Mammary epithelial cell (primary cell): ENCODE measurements at regions of chr17 and their contacts with region 1.

Region 1: DNA sequence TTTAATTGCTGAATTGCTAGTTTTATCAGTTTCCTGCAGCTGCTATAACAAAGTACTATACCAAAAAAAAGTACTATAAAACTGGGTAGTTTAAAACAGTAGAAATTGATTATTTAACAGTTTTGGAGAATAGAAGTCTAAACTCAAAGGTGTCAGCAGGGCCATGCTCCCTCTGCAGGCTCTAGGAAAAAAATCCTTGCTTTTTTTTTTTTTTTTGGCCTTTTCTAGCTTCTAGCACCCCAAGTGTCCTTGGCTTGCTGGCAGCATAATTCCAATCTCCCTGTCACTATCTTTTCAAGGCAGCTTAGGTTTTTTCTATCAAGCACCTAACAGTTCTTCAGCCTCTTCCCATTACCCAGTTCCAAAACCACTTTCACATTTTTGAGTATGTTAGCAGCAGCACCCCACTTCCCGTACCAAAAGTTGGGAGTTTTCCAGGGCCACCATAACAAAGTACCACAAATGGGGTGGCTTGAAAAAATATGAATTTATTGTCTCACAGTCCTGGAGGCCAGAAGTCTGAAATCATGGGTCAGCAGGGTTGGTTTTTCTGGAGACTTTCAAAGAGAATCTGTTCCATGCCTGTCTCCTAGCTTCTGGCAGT is 37.4 kb downstream of the BPTF start:
- DNase-seq: no peak
- H3K4me3 ChIP-seq: no peak overlapping the region
- H3K27ac ChIP-seq: no peak overlapping the region
- H3K4me1 ChIP-seq: no peaks in the 10 kb centered on the region
- H3K27me3 ChIP-seq: no peaks in the 10 kb centered on the region
- CTCF ChIP-seq: peak in 1 of 2 donors; percentile 31

Region 2: GRCh38 chr17:67151717-67152116 is 711.0 kb before region 1 on chr17:
- CTCF ChIA-PET with region 1: no interaction called
- dilution Hi-C with region 1: no loop called
- in situ Hi-C with region 1: no loop called
- intact Hi-C with region 1: no loop called
- DNase-seq: peak; percentile 85
- H3K4me3 ChIP-seq: no peak overlapping the region
- H3K27ac ChIP-seq: peak overlapping the region; percentile 46
- H3K4me1 ChIP-seq: peaks cover 18% of the 10 kb centered on the region
- H3K27me3 ChIP-seq: no peaks in the 10 kb centered on the region
- CTCF ChIP-seq: no peak

Region 3: DNA sequence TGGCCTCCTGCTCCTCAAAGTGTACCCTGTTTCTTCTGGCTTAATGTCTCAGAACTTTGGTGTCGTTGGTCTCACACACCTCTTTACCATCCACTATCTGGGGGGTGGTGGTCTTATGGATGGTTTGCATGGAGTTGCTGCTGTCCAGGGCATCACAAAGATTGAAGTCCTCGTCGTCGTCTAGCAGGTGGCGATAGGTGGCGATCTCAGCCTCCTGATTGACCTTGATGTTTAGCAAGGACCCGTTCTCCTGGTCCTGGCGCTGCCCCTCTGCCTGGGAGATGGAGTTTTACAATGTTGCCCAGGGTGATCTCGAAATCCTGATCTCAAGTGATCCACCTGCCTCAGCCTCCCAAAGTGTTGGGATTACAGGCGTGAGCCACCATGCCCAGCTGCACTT is 586.6 kb before region 1 on chr17:
- CTCF ChIA-PET with region 1: interaction called, 27 read pairs
- dilution Hi-C with region 1: no loop called
- in situ Hi-C with region 1: no loop called
- intact Hi-C with region 1: no loop called
- DNase-seq: no peak
- H3K4me3 ChIP-seq: no peak overlapping the region
- H3K27ac ChIP-seq: no peak overlapping the region
- H3K4me1 ChIP-seq: peaks cover 12% of the 10 kb centered on the region
- H3K27me3 ChIP-seq: no peaks in the 10 kb centered on the region
- CTCF ChIP-seq: peak; percentile 13 to 50

Region 4: GRCh38 chr17:67879662-67880061 is 16.9 kb after region 1 on chr17:
- CTCF ChIA-PET with region 1: no interaction called
- dilution Hi-C with region 1: no loop called
- in situ Hi-C with region 1: no loop called
- intact Hi-C with region 1: no loop called
- DNase-seq: no peak
- H3K4me3 ChIP-seq: no peak overlapping the region
- H3K27ac ChIP-seq: no peak overlapping the region
- H3K4me1 ChIP-seq: no peaks in the 10 kb centered on the region
- H3K27me3 ChIP-seq: no peaks in the 10 kb centered on the region
- CTCF ChIP-seq: no peak

Region 5: DNA sequence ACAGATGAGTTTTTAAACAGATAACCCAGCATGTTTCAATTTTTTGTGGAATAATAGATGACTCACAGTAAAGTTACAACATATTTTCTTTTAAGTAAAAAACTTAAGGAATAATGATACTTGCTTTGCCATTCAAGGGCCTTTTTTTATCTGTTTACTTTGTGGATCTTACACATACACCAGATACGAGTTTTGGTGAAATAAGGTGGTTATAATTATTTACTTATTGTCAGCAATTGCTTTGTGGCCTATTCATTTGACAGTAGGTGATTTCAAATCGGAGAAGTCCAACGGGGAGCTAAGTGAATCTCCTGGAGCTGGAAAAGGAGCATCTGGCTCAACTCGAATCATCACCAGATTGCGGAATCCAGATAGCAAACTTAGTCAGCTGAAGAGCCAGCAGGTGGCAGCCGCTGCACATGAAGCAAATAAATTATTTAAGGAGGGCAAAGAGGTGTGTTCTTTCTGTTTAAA is 28.9 kb after region 1 on chr17:
- CTCF ChIA-PET with region 1: no interaction called
- dilution Hi-C with region 1: no loop called
- in situ Hi-C with region 1: no loop called
- intact Hi-C with region 1: no loop called
- DNase-seq: peak; percentile 5
- H3K4me3 ChIP-seq: no peak overlapping the region
- H3K27ac ChIP-seq: no peak overlapping the region
- H3K4me1 ChIP-seq: no peaks in the 10 kb centered on the region
- H3K27me3 ChIP-seq: no peaks in the 10 kb centered on the region
- CTCF ChIP-seq: peak; percentile 8 to 29

Region 6: GRCh38 chr17:67947325-67947813 is 84.7 kb after region 1 on chr17:
- CTCF ChIA-PET with region 1: no interaction called
- dilution Hi-C with region 1: loop called (anchors 5 kb)
- in situ Hi-C with region 1: no loop called
- intact Hi-C with region 1: no loop called
- DNase-seq: no peak
- H3K4me3 ChIP-seq: no peak overlapping the region
- H3K27ac ChIP-seq: no peak overlapping the region
- H3K4me1 ChIP-seq: no peaks in the 10 kb centered on the region
- H3K27me3 ChIP-seq: no peaks in the 10 kb centered on the region
- CTCF ChIP-seq: no peak